Colonic mucosa (tissue), 4 donors: ENCODE measurements at regions of chr1 and their contacts with region 1.

Region 1: GRCh38 chr1:226547754-226548191 is 791 bp upstream of the STUM start:
- DNase-seq: peak; percentile 84
- H3K4me3 ChIP-seq: no peak overlapping the region
- H3K27ac ChIP-seq: no peak overlapping the region
- H3K4me1 ChIP-seq: peaks cover 23% of the 10 kb centered on the region
- H3K27me3 ChIP-seq: peaks cover 16% of the 10 kb centered on the region
- CTCF ChIP-seq: peak; percentile 73

Region 2: DNA sequence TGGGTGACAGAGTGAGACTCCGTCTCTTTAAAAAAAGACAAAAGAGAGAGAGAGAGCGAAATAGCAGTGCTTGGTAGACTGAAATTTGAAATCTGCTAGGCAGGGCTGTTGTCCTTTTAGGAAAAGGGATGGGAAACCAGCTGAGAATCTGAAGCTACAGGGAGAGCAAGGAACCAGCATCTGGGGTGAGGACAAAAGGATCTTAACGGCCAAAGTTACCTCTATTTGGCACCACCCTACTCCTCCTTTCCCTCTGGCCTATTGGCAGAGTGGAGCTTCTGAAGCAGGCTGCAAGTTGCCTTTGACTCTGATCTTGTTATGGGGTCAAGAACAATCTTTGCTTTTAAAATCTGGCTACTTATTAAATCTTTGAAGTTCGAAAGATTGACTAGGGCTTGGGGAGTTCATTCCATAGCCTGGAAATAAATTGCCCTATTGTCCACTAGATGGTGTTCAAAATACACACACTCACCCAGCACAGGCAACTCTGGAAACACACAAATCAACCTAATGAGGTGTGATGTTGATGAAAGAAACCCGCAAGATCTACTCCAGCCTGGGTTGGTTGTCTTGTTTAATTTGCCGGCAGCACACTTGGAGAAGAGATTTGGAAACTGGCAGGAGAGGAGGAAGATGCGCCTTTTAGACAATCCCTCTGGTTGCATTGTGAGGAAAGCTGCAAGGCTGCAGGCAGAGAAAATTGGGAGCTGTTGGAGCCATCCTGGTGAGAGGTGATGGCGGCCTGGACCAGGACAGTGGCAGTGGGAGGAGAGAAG is 123.4 kb before region 1 on chr1:
- intact Hi-C with region 1: loop called (anchors 10 kb)
- DNase-seq: no peak
- H3K4me3 ChIP-seq: no peak overlapping the region
- H3K27ac ChIP-seq: no peak overlapping the region
- H3K4me1 ChIP-seq: no peaks in the 10 kb centered on the region
- H3K27me3 ChIP-seq: no peaks in the 10 kb centered on the region
- CTCF ChIP-seq: peak; percentile 59

Region 3: GRCh38 chr1:226608699-226609505 is 61.1 kb after region 1 on chr1:
- intact Hi-C with region 1: loop called (anchors 2 kb)
- DNase-seq: peak; percentile 59
- H3K4me3 ChIP-seq: no peak overlapping the region
- H3K27ac ChIP-seq: no peak overlapping the region
- H3K4me1 ChIP-seq: no peaks in the 10 kb centered on the region
- H3K27me3 ChIP-seq: no peaks in the 10 kb centered on the region
- CTCF ChIP-seq: peak; percentile 82

Region 4: DNA sequence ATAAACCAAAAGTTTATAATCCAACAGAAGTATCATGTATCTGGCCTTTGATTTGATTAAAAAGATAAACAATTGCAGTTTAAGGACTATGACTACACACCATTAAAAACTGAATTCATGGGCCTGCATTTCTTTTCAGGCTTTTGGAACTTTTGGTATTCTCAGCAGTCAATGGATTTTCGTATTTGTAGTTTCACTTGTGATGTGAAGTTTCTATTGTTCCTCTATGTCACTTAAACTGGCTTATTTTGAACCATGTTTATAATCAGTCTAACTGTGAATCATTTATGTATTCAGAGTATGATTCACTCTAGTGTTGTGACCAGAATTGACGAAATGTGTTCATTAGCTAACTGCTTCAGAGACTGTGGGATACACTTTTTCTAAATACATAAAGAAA is 525.2 kb after region 1 on chr1:
- intact Hi-C with region 1: no loop called
- DNase-seq: no peak
- H3K4me3 ChIP-seq: no peak overlapping the region
- H3K27ac ChIP-seq: no peak overlapping the region
- H3K4me1 ChIP-seq: no peaks in the 10 kb centered on the region
- H3K27me3 ChIP-seq: no peaks in the 10 kb centered on the region
- CTCF ChIP-seq: no peak